GM23248 (cell line): ENCODE measurements at regions of chr4 and their contacts with region 1.

Region 1: GRCh38 chr4:85807247-85807950 is 332.4 kb downstream of the ARHGAP24 start:
- DNase-seq: peak; percentile 80
- H3K4me3 ChIP-seq: peak overlapping the region; percentile 28; the same call in 1 of the 2 replicates
- H3K27ac ChIP-seq: peak overlapping the region; percentile 64
- H3K4me1 ChIP-seq: peaks cover 27% of the 10 kb centered on the region
- H3K27me3 ChIP-seq: no peaks in the 10 kb centered on the region

Region 2: DNA sequence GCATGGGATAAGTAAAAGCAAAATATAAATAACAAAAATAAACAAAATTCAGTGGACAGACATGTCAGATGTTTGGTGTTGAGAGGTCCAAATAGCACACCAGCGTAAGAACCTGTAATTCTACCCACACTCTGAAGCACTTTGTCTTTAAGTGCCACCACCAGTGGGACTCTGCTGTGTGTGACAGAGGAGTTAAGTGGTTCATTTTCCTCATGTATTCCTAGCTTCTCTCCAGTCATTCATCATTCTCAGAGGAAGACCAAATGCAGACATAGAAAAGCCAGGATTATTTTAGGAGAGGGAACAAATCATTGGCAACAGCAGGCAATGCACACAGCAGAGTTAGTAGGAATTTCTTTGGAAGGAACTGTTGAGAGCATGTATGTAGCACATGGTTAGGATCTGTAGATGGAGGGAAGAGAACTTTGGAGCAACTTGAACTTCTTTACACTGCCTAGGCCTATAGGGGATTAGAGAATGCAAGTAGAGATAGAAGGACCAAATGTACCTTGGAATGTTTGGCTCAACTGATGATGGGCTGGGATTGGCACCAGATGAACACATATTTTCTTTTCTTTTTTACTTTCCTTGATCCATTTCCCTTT is 375.4 kb before region 1 on chr4:
- in situ Hi-C with region 1: no loop called
- DNase-seq: no peak
- H3K4me3 ChIP-seq: no peak overlapping the region
- H3K27ac ChIP-seq: no peak overlapping the region
- H3K4me1 ChIP-seq: no peaks in the 10 kb centered on the region
- H3K27me3 ChIP-seq: no peaks in the 10 kb centered on the region

Region 3: DNA sequence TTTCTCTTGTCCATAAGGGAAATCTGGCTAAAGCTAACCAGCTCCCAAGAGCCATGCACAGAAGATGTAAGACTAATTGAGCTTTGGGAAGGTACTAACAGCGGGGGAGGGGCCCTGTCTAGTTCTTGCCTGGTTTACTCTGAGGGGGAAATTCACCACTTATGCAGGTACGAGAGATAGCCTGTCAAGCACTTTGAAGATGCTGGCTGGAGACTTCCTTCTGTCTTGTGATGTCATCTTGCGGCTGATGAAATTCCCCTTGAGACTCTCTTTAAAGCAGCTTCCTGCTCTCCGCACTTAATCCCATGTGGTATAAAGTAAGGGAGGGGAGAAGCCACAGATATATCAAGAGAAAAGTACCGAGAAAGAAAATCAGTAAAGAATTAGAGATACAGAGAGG is 207.2 kb after region 1 on chr4:
- in situ Hi-C with region 1: no loop called
- DNase-seq: no peak
- H3K4me3 ChIP-seq: no peak overlapping the region
- H3K27ac ChIP-seq: no peak overlapping the region
- H3K4me1 ChIP-seq: peaks cover 41% of the 10 kb centered on the region
- H3K27me3 ChIP-seq: no peaks in the 10 kb centered on the region

Region 4: DNA sequence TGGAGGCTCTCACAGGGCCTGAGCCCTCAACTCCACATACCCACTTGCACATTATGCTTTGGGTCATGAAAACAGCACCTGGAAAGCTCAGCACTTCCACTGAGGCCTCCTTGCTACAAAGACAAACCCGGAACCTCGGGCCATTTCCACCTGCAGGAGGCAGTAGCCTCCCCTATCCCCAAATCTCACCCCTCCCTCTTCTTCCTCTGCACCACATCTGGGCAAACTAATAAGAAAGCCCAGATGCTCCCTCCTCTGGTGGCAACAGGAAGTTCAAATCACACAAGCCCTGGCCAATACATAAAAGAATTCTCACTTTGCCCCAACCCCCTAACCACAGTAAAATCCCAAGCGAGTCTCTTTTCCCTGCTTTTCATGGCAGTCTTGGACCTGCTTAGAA is 416.1 kb after region 1 on chr4:
- in situ Hi-C with region 1: loop called (anchors 25 kb)
- DNase-seq: peak; percentile 67
- H3K4me3 ChIP-seq: no peak overlapping the region
- H3K27ac ChIP-seq: no peak overlapping the region
- H3K4me1 ChIP-seq: peaks cover 20% of the 10 kb centered on the region
- H3K27me3 ChIP-seq: no peaks in the 10 kb centered on the region